Calu3 (cell line): ENCODE measurements at regions of chr2 and their contacts with region 1.

Region 1: DNA sequence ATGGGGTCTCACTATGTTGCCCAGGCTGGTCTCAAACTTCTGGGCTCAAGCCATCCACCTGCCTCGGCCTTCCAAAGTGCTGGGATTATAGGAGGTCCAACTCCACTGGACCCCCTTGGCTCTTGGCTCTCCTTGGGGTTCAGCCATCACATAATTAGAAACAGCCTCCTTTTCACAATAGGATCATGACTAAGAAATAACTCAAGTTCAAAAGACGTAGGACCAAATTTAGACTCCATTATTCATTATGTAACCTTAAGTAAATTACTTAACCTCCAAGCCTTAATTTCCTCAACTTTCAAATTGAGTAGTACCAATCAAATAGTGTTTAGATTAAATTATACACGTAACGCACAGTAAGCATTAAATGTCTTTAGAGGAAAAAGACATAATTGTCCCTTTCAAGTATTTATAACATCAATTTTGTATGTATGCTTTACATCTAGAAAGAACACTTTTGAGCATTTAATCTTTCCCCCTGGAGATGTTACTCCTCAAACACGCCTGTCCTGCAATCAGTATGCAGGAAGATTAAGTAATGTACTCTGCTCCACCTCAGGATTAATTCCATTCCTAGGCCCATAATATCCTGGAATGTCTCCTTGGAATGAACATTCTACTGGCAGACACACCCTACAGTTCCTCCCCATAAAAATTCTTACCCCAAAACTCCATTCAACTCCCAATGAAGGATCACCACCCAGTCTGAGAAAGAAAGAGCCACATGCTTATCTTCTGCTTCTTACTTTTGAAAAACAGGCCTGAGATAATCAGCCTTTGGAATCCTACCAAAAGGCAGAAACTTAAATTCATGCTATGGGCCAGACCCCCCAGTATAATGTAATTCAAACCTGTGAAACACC is 49.1 kb downstream of the COBLL1 start:
- DNase-seq: no peak
- H3K4me3 Mint-ChIP-seq: no peak overlapping the region
- H3K27ac Mint-ChIP-seq: no peak overlapping the region
- H3K4me1 Mint-ChIP-seq: peaks cover 20% of the 10 kb centered on the region
- H3K27me3 Mint-ChIP-seq: no peaks in the 10 kb centered on the region
- CTCF ChIP-seq: no peak

Region 2: DNA sequence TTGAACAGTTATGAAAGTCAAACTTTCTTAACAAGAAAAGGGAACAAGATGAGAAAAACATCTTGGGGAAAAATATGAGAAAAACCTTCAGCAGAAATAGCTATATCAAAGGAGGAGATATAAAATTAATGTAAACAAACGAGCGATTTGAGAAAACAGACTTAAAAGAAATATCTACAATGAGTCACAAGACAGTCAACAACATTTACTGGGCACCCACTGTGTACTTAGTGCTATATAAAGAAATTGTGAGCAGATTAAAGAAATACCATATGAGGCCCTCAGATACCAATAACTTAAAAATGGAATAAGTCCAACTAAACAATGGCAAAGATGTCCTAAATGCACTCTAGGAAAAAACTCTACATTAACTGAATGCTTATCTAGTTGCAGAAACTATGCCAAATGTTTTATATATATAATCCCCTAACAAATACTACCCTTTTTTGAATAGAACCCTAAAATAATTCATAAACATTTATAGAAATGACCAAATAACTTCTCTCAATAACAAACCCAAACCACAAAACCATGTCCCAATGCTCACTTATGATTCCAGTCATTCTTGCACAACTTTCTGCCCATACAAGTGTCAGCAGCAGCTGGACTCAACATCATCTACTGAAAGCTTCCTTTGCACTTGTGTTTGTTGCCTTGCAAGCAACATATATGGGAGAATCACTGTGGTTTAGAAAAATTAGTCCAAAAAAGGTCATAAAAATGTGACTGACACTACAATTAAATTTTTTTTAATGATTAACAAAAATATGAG is 34.4 kb before region 1 on chr2:
- CTCF ChIA-PET with region 1: no interaction called
- intact Hi-C with region 1: loop called (anchors 5 kb)
- DNase-seq: no peak
- H3K4me3 Mint-ChIP-seq: no peak overlapping the region
- H3K27ac Mint-ChIP-seq: no peak overlapping the region
- H3K4me1 Mint-ChIP-seq: peaks cover 26% of the 10 kb centered on the region
- H3K27me3 Mint-ChIP-seq: no peaks in the 10 kb centered on the region
- CTCF ChIP-seq: no peak

Region 3: GRCh38 chr2:164981217-164981990 is 188.9 kb after region 1 on chr2:
- CTCF ChIA-PET with region 1: no interaction called
- intact Hi-C with region 1: no loop called
- DNase-seq: no peak
- H3K4me3 Mint-ChIP-seq: no peak overlapping the region
- H3K27ac Mint-ChIP-seq: no peak overlapping the region
- H3K4me1 Mint-ChIP-seq: peaks cover 19% of the 10 kb centered on the region
- H3K27me3 Mint-ChIP-seq: no peaks in the 10 kb centered on the region
- CTCF ChIP-seq: no peak